Spleen (tissue), 13 donors: ENCODE measurements at regions of chr7 and their contacts with region 1.

Region 1: GRCh38 chr7:45923290-45923689 is 2.2 kb upstream of the IGFBP3 start:
- DNase-seq: peak; percentile 86
- H3K4me3 ChIP-seq: peak overlapping the region in 5 of 8 donors; percentile 5 to 68 (median 18)
- H3K27ac ChIP-seq: peak overlapping the region in 4 of 8 donors; percentile 51 to 66 (median 60)
- H3K4me1 ChIP-seq: peaks cover 5 to 50% (median 34%) of the 10 kb centered on the region in 6 donors
- H3K27me3 ChIP-seq: peaks cover 0 to 67% (median 35%) of the 10 kb centered on the region in 7 donors
- CTCF ChIP-seq: peak; percentile 31 to 79 (median 70)
- POLR2A ChIP-seq: no peak

Region 2: GRCh38 chr7:46352004-46352954 is 429.0 kb after region 1 on chr7:
- intact Hi-C with region 1: loop called (anchors 5 kb)
- DNase-seq: no peak
- H3K4me3 ChIP-seq: no peak overlapping the region
- H3K27ac ChIP-seq: no peak overlapping the region
- H3K4me1 ChIP-seq: no peaks in the 10 kb centered on the region
- H3K27me3 ChIP-seq: peaks cover 0 to 4% (median 0%) of the 10 kb centered on the region in 7 donors
- CTCF ChIP-seq: peak in 9 of 11 experiments; percentile 22 to 74 (median 53)
- POLR2A ChIP-seq: no peak

Region 3: DNA sequence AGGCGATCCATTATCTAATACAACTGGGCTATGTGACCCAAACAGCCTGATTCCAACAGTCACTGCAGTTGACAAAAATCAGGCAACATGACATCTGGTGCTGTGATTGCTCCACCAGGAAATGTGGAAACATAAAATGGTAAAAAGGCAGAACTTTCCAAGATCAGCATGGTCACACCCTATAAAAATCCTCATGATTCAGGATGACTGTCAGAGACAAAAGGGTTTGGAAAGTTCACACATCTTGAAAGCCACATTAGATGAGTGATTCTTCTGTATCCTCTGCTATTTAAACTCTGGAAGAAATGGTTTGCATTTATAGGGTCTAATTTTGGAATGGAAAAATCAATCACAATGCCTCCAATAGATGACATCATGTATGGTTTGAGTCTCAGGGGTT is 660.4 kb after region 1 on chr7:
- intact Hi-C with region 1: no loop called
- DNase-seq: no peak
- H3K4me3 ChIP-seq: no peak overlapping the region
- H3K27ac ChIP-seq: no peak overlapping the region
- H3K4me1 ChIP-seq: no peaks in the 10 kb centered on the region
- H3K27me3 ChIP-seq: no peaks in the 10 kb centered on the region
- CTCF ChIP-seq: no peak
- POLR2A ChIP-seq: no peak

Region 4: GRCh38 chr7:47088329-47089067 is 1165.2 kb after region 1 on chr7:
- intact Hi-C with region 1: loop called (anchors 5 kb)
- DNase-seq: no peak
- H3K4me3 ChIP-seq: no peak overlapping the region
- H3K27ac ChIP-seq: peak overlapping the region in 2 of 8 donors; percentile 32 to 40
- H3K4me1 ChIP-seq: peaks cover 0 to 8% (median 2%) of the 10 kb centered on the region in 6 donors
- H3K27me3 ChIP-seq: no peaks in the 10 kb centered on the region
- CTCF ChIP-seq: peak; percentile 16 to 82 (median 72)
- POLR2A ChIP-seq: no peak

Region 5: GRCh38 chr7:47179812-47180515 is 1256.7 kb after region 1 on chr7:
- intact Hi-C with region 1: loop called (anchors 10 kb)
- DNase-seq: no peak
- H3K4me3 ChIP-seq: no peak overlapping the region
- H3K27ac ChIP-seq: no peak overlapping the region
- H3K4me1 ChIP-seq: peaks cover 0 to 4% (median 0%) of the 10 kb centered on the region in 6 donors
- H3K27me3 ChIP-seq: peaks cover 0 to 3% (median 0%) of the 10 kb centered on the region in 7 donors
- CTCF ChIP-seq: peak in 10 of 11 experiments; percentile 33 to 76 (median 56)
- POLR2A ChIP-seq: no peak